ENCODE measurements at regions of chr17 and their contacts with region 1.

Region 1: DNA sequence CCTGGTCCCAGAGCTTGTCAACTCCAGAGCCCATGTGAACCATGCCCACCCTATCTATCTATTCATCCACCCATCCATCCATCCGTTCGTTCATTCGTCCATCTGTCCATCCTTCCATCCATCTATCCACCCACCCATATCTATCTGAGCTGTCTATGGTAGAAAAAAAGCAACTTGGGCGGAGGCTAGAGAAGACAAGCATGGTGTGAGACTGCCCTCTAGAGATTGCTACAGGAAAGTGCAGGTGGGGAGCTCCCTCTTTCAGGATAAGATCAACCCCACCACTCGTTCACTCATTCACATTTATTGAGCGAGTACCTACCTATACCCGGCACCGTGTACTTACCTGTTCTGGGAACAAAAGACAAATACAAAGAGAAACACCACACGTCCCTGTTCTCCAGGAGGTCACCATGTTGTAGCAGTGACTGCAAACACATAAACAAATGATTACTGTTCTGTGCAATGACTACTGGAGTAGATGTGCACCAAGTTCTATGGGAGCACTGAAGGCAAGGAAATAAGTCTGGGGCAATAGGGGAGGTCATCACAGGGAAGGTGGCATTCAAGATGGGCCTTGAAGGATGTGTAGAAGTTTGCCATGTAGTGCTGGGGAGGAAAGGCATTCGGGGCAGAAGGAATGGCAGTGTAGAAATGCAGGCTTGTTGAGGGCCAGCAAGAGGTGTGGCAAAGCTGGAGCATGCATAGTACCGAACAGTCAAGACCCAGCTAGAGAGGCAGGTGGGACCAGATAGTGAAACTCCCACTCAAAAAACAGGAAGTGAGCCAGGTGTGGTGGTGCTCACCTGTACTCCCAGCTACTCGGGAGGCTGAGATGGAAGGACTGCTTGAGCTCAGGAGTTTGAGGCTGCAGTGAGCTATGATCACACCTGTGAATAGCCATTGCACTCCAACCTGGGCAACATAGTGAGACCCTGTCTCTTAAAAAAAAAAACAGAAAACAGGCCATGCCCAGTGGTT is 13.4 kb upstream of the ATP5MC1 start:
- H3K4me3 ChIP-seq: no peak overlapping the region
- H3K27ac ChIP-seq: no peak overlapping the region
- H3K4me1 ChIP-seq: no peaks in the 10 kb centered on the region
- CTCF ChIP-seq: peak; percentile 94

Region 2: GRCh38 chr17:48215583-48216139 is 663.5 kb before region 1 on chr17:
- CTCF ChIA-PET with region 1: interaction called, 10 read pairs
- POLR2A ChIA-PET with region 1: no interaction called
- H3K4me3 ChIP-seq: no peak overlapping the region
- H3K27ac ChIP-seq: no peak overlapping the region
- H3K4me1 ChIP-seq: peaks cover 6% of the 10 kb centered on the region
- CTCF ChIP-seq: peak; percentile 75

Region 3: GRCh38 chr17:48513097-48513496 is 366.1 kb before region 1 on chr17:
- CTCF ChIA-PET with region 1: no interaction called
- POLR2A ChIA-PET with region 1: no interaction called
- H3K4me3 ChIP-seq: no peak overlapping the region
- H3K27ac ChIP-seq: no peak overlapping the region
- H3K4me1 ChIP-seq: peaks cover 17% of the 10 kb centered on the region; the same call in 1 of the 2 replicates
- CTCF ChIP-seq: no peak

Region 4: GRCh38 chr17:48704361-48705248 is 174.6 kb before region 1 on chr17:
- CTCF ChIA-PET with region 1: interaction called, 14 read pairs
- POLR2A ChIA-PET with region 1: no interaction called
- H3K4me3 ChIP-seq: no peak overlapping the region
- H3K27ac ChIP-seq: no peak overlapping the region
- H3K4me1 ChIP-seq: no peaks in the 10 kb centered on the region; the same call in 1 of the 2 replicates
- CTCF ChIP-seq: no peak

Region 5: DNA sequence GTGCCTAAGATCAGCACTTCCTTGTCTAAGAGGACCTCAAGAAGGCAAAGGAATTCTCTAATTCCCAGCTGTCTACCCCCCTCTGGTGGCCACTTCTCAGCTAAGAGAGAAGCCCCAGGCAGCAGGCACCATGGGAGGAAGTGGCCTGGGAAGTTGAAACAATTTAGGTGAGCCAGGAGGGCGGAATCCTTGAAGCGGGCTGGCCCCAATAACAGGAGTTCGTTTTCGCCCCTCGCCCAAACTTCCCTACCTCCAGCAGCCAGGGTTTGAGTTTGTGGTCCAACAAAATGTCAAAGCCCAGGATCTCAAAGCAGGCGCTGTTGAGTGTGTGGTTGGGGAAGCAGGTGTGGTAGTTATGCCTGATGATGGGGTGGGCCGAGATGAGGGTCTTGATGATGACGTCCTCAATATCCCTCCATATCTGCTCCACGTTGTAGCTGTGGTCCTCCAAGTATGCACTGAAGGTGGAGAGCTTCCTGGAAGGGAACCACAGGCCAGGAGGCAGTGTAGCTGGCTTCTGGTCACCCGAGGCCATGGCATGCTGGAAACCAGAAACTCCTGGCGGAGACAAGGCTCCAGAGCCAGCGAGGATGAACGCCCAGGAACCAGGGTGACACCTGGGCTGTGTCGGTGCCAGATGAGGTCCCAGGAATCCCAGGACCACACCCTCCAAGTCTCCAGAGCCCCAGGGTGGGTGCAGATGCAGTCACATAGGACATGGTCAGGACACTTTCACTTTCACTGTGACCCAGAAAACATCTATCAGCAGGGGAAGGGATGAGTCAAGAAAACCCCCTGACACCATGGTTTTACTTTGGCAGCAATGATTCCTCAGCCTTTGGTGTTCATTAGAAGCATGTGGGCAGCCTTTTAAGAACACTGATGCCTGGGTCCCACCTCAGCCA is 87.8 kb before region 1 on chr17:
- CTCF ChIA-PET with region 1: interaction called, 20 read pairs
- POLR2A ChIA-PET with region 1: no interaction called
- H3K4me3 ChIP-seq: no peak overlapping the region
- H3K27ac ChIP-seq: no peak overlapping the region
- H3K4me1 ChIP-seq: no peaks in the 10 kb centered on the region
- CTCF ChIP-seq: peak; percentile 70; the same call in 1 of the 2 replicates

Region 6: DNA sequence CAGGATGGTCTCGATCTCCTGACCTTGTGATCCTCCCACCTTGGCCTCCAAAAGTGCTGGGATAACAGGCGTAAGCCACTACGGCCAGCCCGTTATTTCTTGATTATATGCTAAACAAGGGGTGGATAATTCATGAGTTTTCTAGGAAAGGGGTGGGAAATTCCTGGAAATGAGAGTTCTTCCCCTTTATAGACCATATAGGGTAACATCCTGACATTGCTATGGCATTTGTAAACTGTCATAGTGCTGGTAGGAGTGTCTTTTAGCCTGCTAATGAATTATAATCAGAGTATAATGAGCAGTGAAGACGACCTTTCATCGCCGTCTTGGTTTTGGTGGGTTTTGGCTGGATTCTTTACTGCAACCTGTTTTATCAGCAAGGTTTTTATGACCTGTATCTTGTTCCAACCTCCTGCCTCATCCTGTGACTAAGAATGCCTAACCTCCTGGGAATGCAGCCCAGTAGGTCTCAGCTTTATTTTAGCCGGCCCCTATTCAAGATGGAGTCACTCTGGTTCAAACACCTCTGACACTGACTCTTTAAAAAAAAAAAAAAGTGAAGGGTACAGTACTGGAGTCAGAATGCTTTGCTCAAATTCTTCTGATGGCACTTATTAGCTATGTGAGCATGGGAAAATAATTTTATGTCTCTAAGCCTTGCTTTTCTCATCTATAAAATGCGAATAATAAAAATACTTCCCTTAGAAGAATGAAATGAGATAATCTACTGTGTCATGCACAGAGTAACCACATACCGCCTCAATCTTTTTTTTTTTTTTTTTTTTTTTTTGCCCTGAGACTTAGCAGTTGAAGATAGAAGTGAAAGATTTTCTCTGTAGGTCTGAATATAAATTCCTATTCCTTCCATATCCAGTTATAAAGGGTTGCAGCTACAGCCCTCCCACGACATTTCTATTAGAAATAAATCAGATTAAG is 53.5 kb before region 1 on chr17:
- CTCF ChIA-PET with region 1: interaction called, 10 read pairs
- POLR2A ChIA-PET with region 1: interaction called, 3 read pairs
- H3K4me3 ChIP-seq: no peak overlapping the region
- H3K27ac ChIP-seq: no peak overlapping the region
- H3K4me1 ChIP-seq: no peaks in the 10 kb centered on the region
- CTCF ChIP-seq: no peak

Region 7: GRCh38 chr17:48850792-48851323 is 28.4 kb before region 1 on chr17:
- CTCF ChIA-PET with region 1: interaction called, 26 read pairs
- POLR2A ChIA-PET with region 1: no interaction called
- H3K4me3 ChIP-seq: no peak overlapping the region
- H3K27ac ChIP-seq: no peak overlapping the region
- H3K4me1 ChIP-seq: no peaks in the 10 kb centered on the region
- CTCF ChIP-seq: no peak

Region 8: DNA sequence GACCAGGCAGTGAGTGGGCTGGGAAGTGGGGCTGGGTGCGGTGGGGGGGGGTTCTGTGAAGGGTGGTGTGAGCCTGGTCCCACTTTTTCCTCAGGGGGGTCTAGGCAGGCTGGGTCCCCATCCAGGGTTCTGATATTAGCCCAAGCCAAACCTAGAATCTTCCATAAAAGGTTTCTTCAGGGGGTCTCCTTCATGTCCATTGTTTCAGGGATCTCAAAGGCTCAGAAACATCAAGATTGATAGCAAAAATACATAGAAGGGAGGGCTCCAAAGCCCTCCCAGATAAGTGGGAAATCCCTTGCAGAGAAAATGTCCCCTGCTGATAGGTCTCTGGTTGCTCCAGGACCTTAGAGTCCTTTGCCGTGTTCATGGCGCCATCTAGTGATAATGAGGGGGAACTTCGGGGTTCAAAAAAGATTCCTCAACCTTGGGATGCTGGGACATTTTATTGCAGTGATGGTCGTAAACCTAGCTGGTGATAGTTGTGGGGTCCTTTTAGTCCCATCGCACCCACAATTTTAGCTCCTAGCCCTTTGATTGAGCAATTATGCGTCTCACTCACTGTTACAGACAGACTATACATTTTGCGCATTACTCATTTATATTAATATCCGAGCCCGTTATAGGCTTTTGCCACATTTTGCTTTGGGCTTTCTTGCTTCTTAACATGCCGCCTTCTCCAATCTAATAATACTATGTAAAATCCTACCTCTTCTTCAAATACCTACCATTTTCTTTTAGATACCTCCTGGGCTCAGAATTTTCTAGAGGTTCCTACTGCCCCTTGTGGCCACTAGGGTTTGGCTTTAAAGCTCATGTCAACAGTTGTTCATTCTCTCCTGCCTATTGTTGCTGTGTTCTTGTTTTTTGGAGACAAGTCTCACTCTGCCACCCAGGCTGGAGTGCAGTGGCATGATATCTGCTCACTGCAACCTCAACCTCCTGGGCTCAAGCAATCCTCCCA is 153.0 kb after region 1 on chr17:
- CTCF ChIA-PET with region 1: interaction called, 13 read pairs
- POLR2A ChIA-PET with region 1: no interaction called
- H3K4me3 ChIP-seq: no peak overlapping the region
- H3K27ac ChIP-seq: 0 out of 2 replicates have a peak overlapping the region, but pooled peaks have one; percentile 5
- H3K4me1 ChIP-seq: no peaks in the 10 kb centered on the region; the same call in 1 of the 2 replicates
- CTCF ChIP-seq: peak; percentile 73

Measured in HEK293 (cell line).